Ascending aorta (tissue), 2 donors: ENCODE measurements at regions of chr10 and their contacts with region 1.

Region 1: GRCh38 chr10:121823993-121824463 is 103.8 kb downstream of the ATE1 start:
- DNase-seq: no peak
- H3K4me3 ChIP-seq: no peak overlapping the region
- H3K27ac ChIP-seq: no peak overlapping the region
- H3K4me1 ChIP-seq: no peaks in the 10 kb centered on the region
- H3K27me3 ChIP-seq: no peaks in the 10 kb centered on the region
- CTCF ChIP-seq: peak in 2 of 3 experiments; percentile 57 to 60

Region 2: DNA sequence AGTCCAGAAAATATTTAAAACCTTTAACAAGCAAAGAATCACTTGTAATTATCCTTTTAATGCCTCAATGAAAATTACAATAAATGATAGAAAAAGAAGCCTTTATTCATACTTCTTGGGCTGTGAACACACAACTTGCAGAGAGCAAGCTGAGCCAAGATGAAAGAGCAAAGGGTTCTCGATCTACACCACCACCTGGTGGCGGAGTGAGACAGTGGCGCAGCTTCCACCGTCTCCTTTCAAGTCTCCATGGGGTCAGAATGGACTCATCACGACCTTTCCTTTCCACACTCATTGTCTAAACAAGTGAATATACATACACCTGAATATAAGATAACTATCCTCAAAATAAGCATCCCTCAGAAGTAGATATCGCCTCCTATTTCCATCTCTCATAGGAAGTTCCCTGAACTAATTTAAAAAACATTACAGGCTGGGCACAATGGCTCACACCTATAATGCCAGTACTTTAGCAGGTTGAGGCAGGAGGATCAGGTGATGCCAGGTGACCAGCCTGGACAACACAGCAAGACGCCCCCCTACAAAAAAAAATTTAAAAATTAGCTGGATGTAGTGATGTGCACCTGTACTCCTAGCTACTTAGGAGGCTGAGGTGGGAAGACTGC is 63.1 kb after region 1 on chr10:
- intact Hi-C with region 1: loop called (anchors 10 kb)
- DNase-seq: no peak
- H3K4me3 ChIP-seq: no peak overlapping the region
- H3K27ac ChIP-seq: no peak overlapping the region
- H3K4me1 ChIP-seq: no peaks in the 10 kb centered on the region
- H3K27me3 ChIP-seq: no peaks in the 10 kb centered on the region
- CTCF ChIP-seq: peak in 2 of 3 experiments; percentile 49 to 60